IMR-90 (cell line): ENCODE measurements at regions of chr11 and their contacts with region 1.

Region 1: GRCh38 chr11:74696932-74697687 is 34.1 kb downstream of the CHRDL2 start:
- DNase-seq: peak; percentile 96
- ATAC-seq: peak; percentile 90
- H3K4me3 ChIP-seq: no peak overlapping the region
- H3K27ac ChIP-seq: peak overlapping the region; percentile 77
- H3K4me1 ChIP-seq: peaks cover 24% of the 10 kb centered on the region
- H3K27me3 ChIP-seq: no peaks in the 10 kb centered on the region; the same call in 1 of the 2 replicates
- CTCF ChIP-seq: no peak
- POLR2A ChIP-seq: peak; percentile 75
- RAD21 ChIP-seq: peak; percentile 10

Region 2: GRCh38 chr11:74532501-74533246 is 164.4 kb before region 1 on chr11:
- CTCF ChIA-PET with region 1: no interaction called
- POLR2A ChIA-PET with region 1: no interaction called
- dilution Hi-C with region 1: no loop called
- in situ Hi-C with region 1: no loop called
- intact Hi-C with region 1: no loop called
- DNase-seq: no peak
- ATAC-seq: no peak
- H3K4me3 ChIP-seq: no peak overlapping the region
- H3K27ac ChIP-seq: no peak overlapping the region
- H3K4me1 ChIP-seq: no peaks in the 10 kb centered on the region
- H3K27me3 ChIP-seq: peaks cover 19% of the 10 kb centered on the region
- CTCF ChIP-seq: no peak
- POLR2A ChIP-seq: no peak
- RAD21 ChIP-seq: no peak

Region 3: DNA sequence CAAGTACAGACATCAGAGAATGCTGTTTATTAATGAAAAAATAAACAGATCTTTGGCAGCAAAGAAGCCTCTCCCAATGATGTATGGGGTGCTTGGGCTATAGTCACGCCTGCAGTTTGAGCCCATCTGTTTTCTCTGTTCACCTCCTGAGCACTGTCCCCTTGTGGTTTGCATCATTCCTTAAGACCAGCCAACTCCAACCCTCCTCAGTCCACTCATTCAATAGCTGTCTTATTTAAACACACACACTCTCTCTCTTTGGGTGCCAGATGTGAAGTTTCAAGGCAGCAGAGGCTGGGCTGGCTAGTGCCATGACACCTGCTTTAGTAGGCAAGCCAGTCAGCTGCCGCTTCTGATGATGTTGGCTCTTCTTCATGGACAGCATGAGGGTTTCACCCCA is 46.6 kb before region 1 on chr11:
- CTCF ChIA-PET with region 1: no interaction called
- POLR2A ChIA-PET with region 1: no interaction called
- dilution Hi-C with region 1: no loop called
- in situ Hi-C with region 1: no loop called
- intact Hi-C with region 1: loop called (anchors 1 kb)
- DNase-seq: peak; percentile 100
- ATAC-seq: peak; percentile 93
- H3K4me3 ChIP-seq: no peak overlapping the region
- H3K27ac ChIP-seq: peak overlapping the region; percentile 4; the same call in 1 of the 2 replicates
- H3K4me1 ChIP-seq: peaks cover 33% of the 10 kb centered on the region
- H3K27me3 ChIP-seq: no peaks in the 10 kb centered on the region
- CTCF ChIP-seq: 0 out of 2 replicates have a peak, but pooled peaks have one; percentile 5
- POLR2A ChIP-seq: no peak
- RAD21 ChIP-seq: peak; percentile 40; the same call in 1 of the 2 replicates

Region 4: DNA sequence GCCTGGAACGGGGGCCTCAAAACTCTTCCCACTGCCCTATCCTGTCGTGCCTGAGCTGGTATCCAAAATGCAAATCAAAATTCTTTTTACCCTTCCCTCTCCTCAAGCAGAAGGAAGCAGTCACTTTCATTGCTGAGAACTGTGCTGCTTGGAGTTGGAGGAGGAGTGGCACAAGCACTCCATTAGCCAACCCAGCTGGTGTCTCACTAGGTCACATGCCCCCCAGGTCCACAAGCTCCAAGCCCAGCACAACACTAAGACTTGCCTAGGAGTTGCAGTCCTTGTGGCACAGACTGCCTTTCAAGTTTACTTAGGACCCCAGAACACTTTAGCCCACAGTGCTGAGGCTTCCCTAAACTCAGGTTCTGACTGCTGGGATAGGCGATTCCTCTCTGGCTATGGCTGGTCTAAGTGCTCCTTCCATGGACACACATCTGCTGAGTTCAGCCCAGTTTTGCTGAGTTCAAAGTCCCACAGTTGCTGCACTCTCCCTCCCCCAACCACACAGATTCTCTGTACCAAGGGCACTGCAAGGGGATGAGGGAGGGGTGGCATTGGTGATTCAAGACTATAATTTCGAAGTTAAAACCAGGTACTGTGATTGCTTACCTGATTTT is 34.5 kb before region 1 on chr11:
- CTCF ChIA-PET with region 1: no interaction called
- POLR2A ChIA-PET with region 1: no interaction called
- dilution Hi-C with region 1: no loop called
- in situ Hi-C with region 1: no loop called
- intact Hi-C with region 1: no loop called
- DNase-seq: no peak
- ATAC-seq: no peak
- H3K4me3 ChIP-seq: no peak overlapping the region
- H3K27ac ChIP-seq: no peak overlapping the region
- H3K4me1 ChIP-seq: no peaks in the 10 kb centered on the region
- H3K27me3 ChIP-seq: no peaks in the 10 kb centered on the region
- CTCF ChIP-seq: no peak
- POLR2A ChIP-seq: no peak
- RAD21 ChIP-seq: no peak